ENCODE measurements at regions of chr21 and their contacts with region 1.

Region 1: GRCh38 chr21:37563641-37564340 is 197.2 kb downstream of the DYRK1A start:
- DNase-seq: peak; percentile 95 to 98 (median 98)
- ATAC-seq: peak; percentile 97
- H3K4me3 ChIP-seq: peak overlapping the region; percentile 49
- H3K27ac ChIP-seq: peak overlapping the region; percentile 89
- H3K4me1 ChIP-seq: peaks cover 2% of the 10 kb centered on the region
- H3K27me3 ChIP-seq: no peaks in the 10 kb centered on the region

Region 2: DNA sequence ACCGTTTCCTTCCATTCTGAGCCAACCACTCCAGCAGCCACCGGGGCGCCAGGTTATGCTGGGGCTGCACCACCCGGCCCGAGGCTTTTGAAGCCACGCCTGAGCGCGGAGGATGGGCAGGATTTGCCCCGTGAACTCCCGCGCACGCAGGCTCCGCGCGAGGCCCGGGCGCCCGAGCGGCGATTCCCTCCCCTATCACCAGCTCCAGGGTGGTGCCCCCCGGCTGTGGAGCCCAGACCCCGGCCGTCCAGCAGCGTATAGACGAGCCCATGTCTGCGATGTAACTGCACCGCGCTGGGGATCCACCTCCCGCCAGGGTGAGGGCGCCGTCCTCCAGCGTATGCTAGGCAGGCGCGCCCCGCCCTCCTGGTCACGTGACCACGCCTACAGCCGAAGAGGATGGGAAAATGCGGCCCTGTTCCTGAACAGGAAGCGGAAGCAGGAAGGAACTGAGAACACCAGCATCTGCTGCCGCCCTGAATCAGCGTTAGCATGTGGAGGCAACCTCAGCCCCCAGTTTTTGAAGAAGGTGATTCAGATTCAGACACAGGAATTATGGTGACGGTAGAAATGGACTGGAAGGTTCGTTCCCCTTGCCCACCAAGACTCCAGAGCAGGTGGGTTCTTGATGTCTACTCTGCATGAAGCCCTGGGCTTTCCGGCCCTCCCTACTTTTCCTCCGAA is 342.7 kb before region 1 on chr21:
- intact Hi-C with region 1: loop called in 1 of 4 experiments (anchors 10 kb)
- DNase-seq: peak; percentile 97 to 99 (median 98)
- ATAC-seq: peak; percentile 97 to 98
- H3K4me3 ChIP-seq: peak overlapping the region; percentile 42
- H3K27ac ChIP-seq: peak overlapping the region; percentile 48
- H3K4me1 ChIP-seq: no peaks in the 10 kb centered on the region
- H3K27me3 ChIP-seq: no peaks in the 10 kb centered on the region

Region 3: DNA sequence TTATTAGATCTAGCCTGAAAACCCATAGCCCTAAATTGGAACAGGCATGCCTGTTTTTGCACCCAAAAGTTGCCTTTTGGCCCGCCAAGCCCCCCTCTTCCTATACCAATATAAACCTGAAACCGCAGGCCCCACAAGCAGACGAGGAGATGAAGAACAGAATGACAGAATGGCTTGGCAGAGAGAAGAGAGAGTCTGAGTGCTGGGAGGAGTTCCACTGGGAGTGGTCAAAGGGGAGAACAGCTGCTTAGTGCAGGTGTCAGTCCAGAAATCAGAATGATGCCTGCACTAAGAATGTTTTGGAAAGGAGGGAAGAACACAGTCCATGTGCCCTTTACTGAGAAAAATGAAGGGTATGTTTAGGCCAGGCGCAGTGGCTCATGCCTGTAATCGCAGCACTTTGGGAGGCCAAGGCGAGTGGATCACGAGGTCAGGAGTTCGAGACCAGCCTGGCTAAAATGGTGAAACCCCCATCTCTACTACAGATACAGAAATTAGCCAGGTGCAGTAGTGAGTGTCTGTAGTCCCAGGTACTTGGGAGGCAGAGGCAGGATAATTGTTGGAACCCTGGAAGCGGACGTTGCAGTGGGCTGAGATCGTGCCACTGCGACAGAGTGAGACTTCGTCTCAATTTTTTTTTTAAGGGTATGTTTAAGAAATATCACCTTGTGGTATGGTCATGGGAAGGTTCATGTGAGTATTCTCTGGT is 187.8 kb before region 1 on chr21:
- intact Hi-C with region 1: no loop called
- DNase-seq: no peak
- ATAC-seq: no peak
- H3K4me3 ChIP-seq: no peak overlapping the region
- H3K27ac ChIP-seq: no peak overlapping the region
- H3K4me1 ChIP-seq: peaks cover 17% of the 10 kb centered on the region
- H3K27me3 ChIP-seq: no peaks in the 10 kb centered on the region

Measured in right cardiac atrium (tissue), 5 donors.